ENCODE measurements at regions of chr4 and their contacts with region 1.

Region 1: GRCh38 chr4:42568610-42569207 is 88.2 kb downstream of the ATP8A1 start:
- DNase-seq: peak; percentile 65
- H3K4me3 ChIP-seq: no peak overlapping the region
- H3K27ac ChIP-seq: no peak overlapping the region
- H3K4me1 ChIP-seq: no peaks in the 10 kb centered on the region
- H3K27me3 ChIP-seq: peaks cover 0 to 2% of the 10 kb centered on the region in 2 experiments
- CTCF ChIP-seq: peak; percentile 54 to 63
- POLR2A ChIP-seq: no peak

Region 2: DNA sequence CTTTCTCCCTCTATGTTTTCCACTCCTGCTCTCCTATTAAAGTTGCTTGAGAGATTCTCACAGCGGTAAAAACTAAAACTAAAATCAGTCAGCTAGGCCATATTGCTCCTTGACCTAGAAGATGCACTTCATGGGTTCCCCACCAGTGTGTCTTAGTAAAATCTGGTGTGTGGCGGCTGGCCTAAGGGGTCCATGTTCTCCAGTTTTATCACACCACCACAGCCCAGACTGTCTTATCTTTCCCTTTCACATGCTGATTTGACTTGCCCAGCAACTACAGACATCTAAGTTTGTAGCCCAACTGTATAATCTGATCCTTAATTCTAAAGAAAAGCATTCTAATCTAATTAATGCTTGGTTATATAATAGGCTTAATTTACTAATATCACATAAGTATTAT is 20.2 kb after region 1 on chr4:
- CTCF ChIA-PET with region 1: interaction called, 15 read pairs
- POLR2A ChIA-PET with region 1: no interaction called
- dilution Hi-C with region 1: no loop called
- intact Hi-C with region 1: no loop called
- DNase-seq: no peak
- H3K4me3 ChIP-seq: no peak overlapping the region
- H3K27ac ChIP-seq: no peak overlapping the region
- H3K4me1 ChIP-seq: no peaks in the 10 kb centered on the region
- H3K27me3 ChIP-seq: no peaks in the 10 kb centered on the region
- CTCF ChIP-seq: no peak
- POLR2A ChIP-seq: no peak

Region 3: DNA sequence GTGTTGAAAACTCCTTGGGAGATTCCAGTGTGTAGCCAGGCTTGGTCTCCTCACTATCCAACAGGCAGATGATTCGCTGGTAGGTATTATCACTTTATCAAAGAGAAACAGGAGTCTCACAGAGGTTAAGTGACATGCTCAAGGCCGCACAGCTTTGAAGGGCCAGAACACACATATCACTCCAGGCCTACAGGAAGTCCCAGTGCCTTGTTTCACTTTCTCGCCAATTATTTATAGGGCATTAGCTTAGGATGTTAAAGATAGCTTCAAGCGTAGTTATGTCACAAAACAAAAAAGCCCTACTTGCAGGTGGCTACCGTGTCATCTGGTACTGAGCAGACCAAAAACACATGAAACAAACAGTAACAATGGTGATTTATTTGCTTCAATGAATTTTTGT is 75.0 kb after region 1 on chr4:
- CTCF ChIA-PET with region 1: no interaction called
- POLR2A ChIA-PET with region 1: no interaction called
- dilution Hi-C with region 1: no loop called
- intact Hi-C with region 1: no loop called
- DNase-seq: no peak
- H3K4me3 ChIP-seq: no peak overlapping the region
- H3K27ac ChIP-seq: no peak overlapping the region
- H3K4me1 ChIP-seq: no peaks in the 10 kb centered on the region
- H3K27me3 ChIP-seq: peaks cover 3% of the 10 kb centered on the region in 2 experiments
- CTCF ChIP-seq: no peak
- POLR2A ChIP-seq: no peak

Region 4: DNA sequence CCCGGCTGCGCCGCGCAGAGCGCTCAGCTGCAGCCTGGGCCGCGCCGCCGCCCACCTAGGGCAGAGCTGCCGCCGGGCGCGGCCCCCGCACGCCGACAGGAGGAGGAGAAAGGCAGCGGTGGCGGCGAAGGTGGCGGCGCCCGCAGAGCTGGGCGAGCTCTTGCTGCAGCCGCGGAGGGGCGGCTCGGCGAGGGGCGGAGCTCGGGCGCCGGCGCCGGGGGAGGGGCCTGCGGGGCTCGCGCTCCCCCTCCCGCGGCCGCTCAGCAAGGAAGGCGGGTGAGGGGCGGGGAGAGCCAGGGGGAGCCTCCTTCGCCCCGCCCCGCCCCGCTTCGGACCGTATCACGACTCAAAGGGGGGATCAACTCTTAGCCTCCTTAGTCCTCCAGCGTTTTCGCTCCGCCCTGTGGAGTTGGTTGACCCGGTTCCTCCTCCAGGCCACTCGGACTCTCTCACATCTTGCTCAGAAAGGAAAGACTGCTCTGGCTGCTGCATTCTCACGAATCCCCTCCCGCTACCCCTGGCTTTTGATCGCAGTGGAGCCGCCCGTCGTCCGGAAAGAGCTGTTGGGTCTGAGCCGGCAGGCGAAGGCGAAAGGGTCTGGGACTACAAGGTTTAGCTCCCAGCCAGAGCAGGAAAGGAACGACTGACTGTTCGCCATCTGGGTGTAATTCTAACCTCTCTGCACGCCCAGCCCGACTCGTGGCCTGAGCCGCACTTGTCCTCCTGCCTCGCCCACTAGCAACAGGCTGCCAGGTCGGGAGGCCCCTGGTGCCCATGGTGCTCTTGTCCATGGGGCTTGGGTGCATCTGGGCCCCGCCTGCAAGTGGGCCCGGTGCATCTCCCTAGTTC is 88.5 kb after region 1 on chr4 and contains the start of gene ATP8A1:
- CTCF ChIA-PET with region 1: interaction called, 30 read pairs
- POLR2A ChIA-PET with region 1: no interaction called
- dilution Hi-C with region 1: no loop called
- intact Hi-C with region 1: no loop called
- DNase-seq: peak; percentile 89
- H3K4me3 ChIP-seq: peak within 1 kb of the TSS; percentile 12 to 48 (median 47)
- H3K27ac ChIP-seq: peak within 1 kb of the TSS; percentile 81
- H3K4me1 ChIP-seq: peaks cover 26% of the 10 kb centered on the region
- H3K27me3 ChIP-seq: peaks cover 2 to 16% of the 10 kb centered on the region in 2 experiments
- CTCF ChIP-seq: no peak
- POLR2A ChIP-seq: peak; percentile 45
- total RNA-seq, gene ATP8A1: 1.9 and 11.5 TPM in 2 replicates

Region 5: DNA sequence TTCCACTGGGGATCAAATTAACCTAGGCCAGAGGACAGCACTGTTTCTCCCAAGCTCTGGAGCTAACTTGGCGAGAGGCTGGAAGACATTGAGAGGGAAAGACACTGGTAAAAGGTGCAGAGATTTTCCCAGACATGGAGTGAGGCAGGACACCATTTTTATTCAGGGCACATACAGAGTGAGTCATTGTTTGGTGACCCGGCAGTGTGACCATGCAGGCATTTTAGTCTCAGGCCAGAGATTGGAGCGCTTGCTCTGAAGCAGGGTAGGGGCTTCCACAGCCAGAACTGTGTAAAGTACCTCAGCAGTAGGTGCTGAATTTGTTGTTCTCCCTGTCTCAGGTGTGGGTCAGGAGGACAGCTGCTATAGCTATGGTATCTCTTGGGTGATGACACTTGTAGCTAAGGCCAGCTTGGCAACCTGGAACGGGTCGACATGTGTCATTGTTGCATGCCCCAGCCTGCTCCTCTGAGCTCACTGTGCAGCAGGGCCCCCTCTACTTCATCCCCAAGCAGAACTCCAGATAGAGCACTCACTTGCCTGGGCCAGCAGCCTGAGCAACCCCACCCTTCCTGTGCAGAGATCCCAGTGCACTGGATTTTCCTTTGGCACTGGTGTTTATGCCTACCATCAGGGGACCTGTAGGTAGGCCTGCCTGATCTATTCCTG is 168.0 kb after region 1 on chr4:
- CTCF ChIA-PET with region 1: no interaction called
- POLR2A ChIA-PET with region 1: no interaction called
- dilution Hi-C with region 1: no loop called
- intact Hi-C with region 1: no loop called
- DNase-seq: no peak
- H3K4me3 ChIP-seq: no peak overlapping the region
- H3K27ac ChIP-seq: no peak overlapping the region
- H3K4me1 ChIP-seq: no peaks in the 10 kb centered on the region
- H3K27me3 ChIP-seq: no peaks in the 10 kb centered on the region
- CTCF ChIP-seq: no peak
- POLR2A ChIP-seq: no peak

Region 6: GRCh38 chr4:42750091-42750490 is 181.4 kb after region 1 on chr4:
- CTCF ChIA-PET with region 1: interaction called, 59 read pairs
- POLR2A ChIA-PET with region 1: no interaction called
- dilution Hi-C with region 1: no loop called
- intact Hi-C with region 1: loop called (anchors 1 kb)
- DNase-seq: peak; percentile 18
- H3K4me3 ChIP-seq: no peak overlapping the region
- H3K27ac ChIP-seq: no peak overlapping the region
- H3K4me1 ChIP-seq: no peaks in the 10 kb centered on the region
- H3K27me3 ChIP-seq: no peaks in the 10 kb centered on the region
- CTCF ChIP-seq: no peak
- POLR2A ChIP-seq: no peak

Region 7: DNA sequence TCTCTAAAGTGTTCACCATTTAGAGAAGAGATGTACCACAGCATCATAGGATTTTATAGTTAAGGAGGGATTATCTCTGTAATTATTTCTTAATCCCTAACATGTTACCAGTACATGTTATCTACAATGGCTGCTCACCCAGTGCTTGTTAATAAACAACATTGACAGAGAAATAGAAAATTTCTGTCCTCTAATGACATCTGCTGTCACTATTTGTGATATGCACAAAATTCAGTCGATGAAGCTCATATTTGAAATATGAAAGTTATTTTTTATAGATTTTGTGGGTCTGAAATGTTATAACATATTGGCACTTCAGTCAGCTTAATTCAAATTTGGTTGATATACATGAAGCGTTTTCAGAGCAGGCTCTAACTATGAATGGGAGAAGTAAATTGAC is 275.0 kb after region 1 on chr4:
- CTCF ChIA-PET with region 1: interaction called, 14 read pairs
- POLR2A ChIA-PET with region 1: no interaction called
- dilution Hi-C with region 1: no loop called
- intact Hi-C with region 1: no loop called
- DNase-seq: no peak
- H3K4me3 ChIP-seq: no peak overlapping the region
- H3K27ac ChIP-seq: no peak overlapping the region
- H3K4me1 ChIP-seq: no peaks in the 10 kb centered on the region
- H3K27me3 ChIP-seq: no peaks in the 10 kb centered on the region
- CTCF ChIP-seq: no peak
- POLR2A ChIP-seq: no peak

Region 8: GRCh38 chr4:42865572-42866189 is 297.0 kb after region 1 on chr4:
- CTCF ChIA-PET with region 1: interaction called, 93 read pairs
- POLR2A ChIA-PET with region 1: no interaction called
- dilution Hi-C with region 1: no loop called
- intact Hi-C with region 1: loop called (anchors 1 kb)
- DNase-seq: peak; percentile 35
- H3K4me3 ChIP-seq: no peak overlapping the region
- H3K27ac ChIP-seq: no peak overlapping the region
- H3K4me1 ChIP-seq: no peaks in the 10 kb centered on the region
- H3K27me3 ChIP-seq: no peaks in the 10 kb centered on the region
- CTCF ChIP-seq: peak; percentile 51 to 64
- POLR2A ChIP-seq: no peak

Measured in endothelial cell of umbilical vein (primary cell).